Ovary (tissue), 10 donors: ENCODE measurements at regions of chr7 and their contacts with region 1.

Region 1: DNA sequence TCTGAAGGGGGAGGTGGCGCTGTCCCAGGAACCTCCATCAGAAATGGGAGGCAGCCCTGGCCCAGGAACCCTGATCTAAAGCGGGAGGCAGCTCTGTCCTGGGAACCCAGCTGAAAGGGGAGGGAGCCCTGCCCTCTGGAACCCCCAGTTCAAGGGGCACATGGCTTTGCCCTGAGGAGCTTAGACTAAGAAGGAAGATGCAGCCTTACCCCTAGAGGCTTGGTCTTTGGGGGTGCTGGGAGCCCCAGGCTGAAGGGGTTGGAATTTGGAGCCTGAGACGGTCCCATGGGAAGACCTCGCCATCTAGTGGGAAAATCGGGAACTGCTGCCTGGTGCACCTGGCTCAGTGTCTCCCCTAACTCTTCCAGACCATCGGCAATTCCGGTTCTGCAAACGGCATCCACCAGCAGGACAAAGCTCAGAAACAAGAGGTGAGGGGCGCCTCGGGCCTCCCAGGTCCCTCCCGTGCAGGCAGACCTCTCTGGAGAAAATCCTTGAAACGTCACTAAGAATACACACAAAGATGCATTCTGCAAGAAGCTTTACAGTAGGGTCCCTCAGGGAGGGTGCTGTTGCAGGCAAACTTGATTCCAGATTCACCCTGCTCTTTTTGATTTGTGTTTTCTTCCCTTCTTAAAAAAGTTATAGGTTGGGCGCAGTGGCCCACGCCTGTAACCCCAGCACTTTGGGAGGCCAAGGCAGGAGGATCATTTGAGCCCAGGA is 52.4 kb upstream of the GTF2IRD1 start:
- DNase-seq: peak; percentile 65 to 84 (median 83)
- H3K4me3 ChIP-seq: no peak overlapping the region
- H3K27ac ChIP-seq: no peak overlapping the region
- H3K4me1 ChIP-seq: no peaks in the 10 kb centered on the region
- H3K27me3 ChIP-seq: no peaks in the 10 kb centered on the region
- CTCF ChIP-seq: peak; percentile 86 to 93 (median 93)
- EP300 ChIP-seq: no peak
- POLR2A ChIP-seq: no peak

Region 2: DNA sequence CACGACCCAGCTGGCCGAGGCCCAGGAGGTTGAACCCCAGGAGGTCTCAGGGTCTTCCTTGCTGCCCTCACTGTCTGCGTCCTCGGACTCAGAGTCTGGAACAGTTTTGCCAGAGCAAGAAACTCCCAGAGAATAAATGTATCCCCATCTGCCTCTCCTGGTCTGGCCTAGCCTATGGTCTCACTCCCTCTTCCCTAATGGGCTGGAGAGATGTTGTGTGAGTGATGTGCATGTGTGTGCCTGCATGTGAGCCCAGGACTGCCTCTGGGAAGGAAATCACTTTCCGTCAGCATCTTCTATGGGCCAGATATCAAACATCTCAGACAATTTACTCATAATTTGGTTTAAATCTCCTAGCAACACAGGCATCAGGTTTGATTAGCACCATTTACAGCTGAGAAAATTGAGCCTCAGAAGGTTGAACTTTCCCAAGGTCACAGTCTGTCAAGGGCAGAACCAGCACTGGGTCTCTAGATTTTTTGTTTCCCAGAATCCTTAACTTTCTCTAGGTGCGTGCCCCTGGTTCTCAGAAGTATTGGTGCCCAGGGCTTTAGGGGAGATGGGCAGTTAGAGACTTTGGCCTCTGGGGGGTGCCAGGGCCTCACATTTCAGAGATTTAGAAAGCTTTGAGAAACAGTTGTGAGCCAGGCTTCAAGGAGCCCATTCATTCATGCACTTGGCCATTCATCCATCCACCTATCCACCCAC is 535.4 kb before region 1 on chr7:
- intact Hi-C with region 1: loop called in 1 of 4 experiments (anchors 10 kb)
- DNase-seq: peak in 3 of 5 donors; percentile 44 to 67 (median 49)
- H3K4me3 ChIP-seq: no peak overlapping the region
- H3K27ac ChIP-seq: no peak overlapping the region
- H3K4me1 ChIP-seq: peaks cover 1% of the 10 kb centered on the region
- H3K27me3 ChIP-seq: no peaks in the 10 kb centered on the region
- CTCF ChIP-seq: peak in 2 of 3 donors; percentile 10 to 29
- EP300 ChIP-seq: no peak
- POLR2A ChIP-seq: no peak

Region 3: DNA sequence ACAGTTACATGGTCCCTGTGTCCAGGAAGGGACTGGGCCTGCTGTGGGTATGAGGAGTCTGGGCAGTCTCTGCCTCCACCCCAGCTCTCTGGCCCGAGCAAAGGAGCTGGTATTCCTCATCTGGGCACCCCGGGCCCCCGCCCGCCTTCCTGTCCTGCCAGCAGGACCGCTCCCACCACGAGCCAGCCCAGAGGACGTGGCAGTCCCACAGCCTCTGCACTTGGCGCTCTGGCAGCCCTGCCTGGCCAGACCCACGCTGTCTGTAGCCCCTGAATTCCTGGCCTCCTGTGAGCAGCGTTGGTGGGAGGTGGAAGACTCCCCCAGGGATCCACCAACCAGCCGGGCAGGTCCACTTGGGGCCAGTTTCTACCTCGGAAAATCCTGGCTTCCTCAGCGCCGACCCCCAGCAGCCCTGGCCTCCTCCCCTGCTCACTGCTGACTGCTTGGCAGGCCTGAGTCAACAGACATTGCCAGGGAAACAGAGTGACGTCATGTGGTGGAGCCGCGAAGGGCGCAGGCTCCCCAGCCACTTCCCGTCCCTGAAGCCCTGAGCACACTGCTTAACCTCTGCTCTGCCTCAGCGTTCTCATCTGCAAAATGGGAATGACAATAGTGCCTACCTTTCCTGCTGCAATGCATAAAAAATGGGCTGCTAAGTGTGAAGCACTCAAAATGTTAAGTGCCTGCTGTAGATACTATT is 339.3 kb before region 1 on chr7:
- intact Hi-C with region 1: loop called in 3 of 4 experiments (anchors 5 to 10 kb)
- DNase-seq: peak; percentile 90 to 91 (median 91)
- H3K4me3 ChIP-seq: no peak overlapping the region
- H3K27ac ChIP-seq: peak overlapping the region; percentile 77 to 94
- H3K4me1 ChIP-seq: peaks cover 6% of the 10 kb centered on the region
- H3K27me3 ChIP-seq: no peaks in the 10 kb centered on the region
- CTCF ChIP-seq: no peak
- EP300 ChIP-seq: peak; percentile 12
- POLR2A ChIP-seq: no peak

Region 4: GRCh38 chr7:74068393-74069085 is 332.8 kb before region 1 on chr7:
- intact Hi-C with region 1: loop called in 3 of 4 experiments (anchors 5 to 10 kb)
- DNase-seq: peak in 3 of 5 donors; percentile 43 to 52 (median 44)
- H3K4me3 ChIP-seq: no peak overlapping the region
- H3K27ac ChIP-seq: no peak overlapping the region
- H3K4me1 ChIP-seq: no peaks in the 10 kb centered on the region
- H3K27me3 ChIP-seq: no peaks in the 10 kb centered on the region
- CTCF ChIP-seq: no peak
- EP300 ChIP-seq: no peak
- POLR2A ChIP-seq: no peak

Region 5: GRCh38 chr7:74206589-74207120 is 194.6 kb before region 1 on chr7:
- intact Hi-C with region 1: loop called (anchors 2 to 5 kb)
- DNase-seq: peak; percentile 78 to 93 (median 89)
- H3K4me3 ChIP-seq: no peak overlapping the region
- H3K27ac ChIP-seq: no peak overlapping the region
- H3K4me1 ChIP-seq: no peaks in the 10 kb centered on the region
- H3K27me3 ChIP-seq: no peaks in the 10 kb centered on the region
- CTCF ChIP-seq: peak; percentile 94 to 99 (median 96)
- EP300 ChIP-seq: no peak
- POLR2A ChIP-seq: no peak

Region 6: DNA sequence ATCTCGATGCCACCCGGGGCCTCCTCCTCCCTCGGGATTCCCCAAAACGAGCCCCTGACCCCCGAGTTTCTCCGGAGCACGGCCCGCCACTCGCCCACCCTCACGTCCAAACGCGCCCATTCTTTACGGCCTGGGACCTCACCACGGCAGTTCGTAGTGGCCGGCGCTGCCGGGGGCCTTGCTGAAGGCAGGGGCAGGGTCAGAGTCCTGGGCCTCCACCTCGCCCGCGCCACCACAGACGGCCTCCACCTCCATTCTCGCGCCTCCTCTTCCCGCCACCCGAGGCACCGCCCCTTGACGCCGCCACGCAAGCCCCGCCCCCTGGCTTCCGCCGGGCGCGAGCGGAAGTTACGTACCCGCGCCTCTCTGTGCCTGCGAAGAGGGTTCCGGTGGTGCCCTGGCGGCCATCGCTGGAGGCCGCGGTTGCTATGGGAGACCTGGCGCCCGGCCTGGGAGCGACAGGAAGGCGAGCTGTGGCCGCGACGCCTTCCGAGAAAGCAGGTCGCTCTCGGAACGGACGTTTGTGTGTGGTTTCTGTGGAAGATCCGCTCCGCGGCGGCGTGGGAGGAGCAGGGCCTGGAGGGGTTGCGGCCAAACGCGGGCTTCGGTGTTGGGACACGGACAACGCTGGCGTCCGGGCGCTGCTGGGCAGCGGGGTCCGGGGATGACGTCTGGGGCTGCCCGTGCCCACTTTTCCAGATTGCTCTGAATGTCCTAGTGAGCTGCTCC is 147.0 kb before region 1 on chr7 and contains the start of gene RFC2:
- intact Hi-C with region 1: loop called in 1 of 4 experiments (anchors 5 kb)
- DNase-seq: peak; percentile 94 to 99 (median 97)
- H3K4me3 ChIP-seq: peak within 1 kb of the TSS; percentile 79
- H3K27ac ChIP-seq: peak within 1 kb of the TSS; percentile 18 to 84
- H3K4me1 ChIP-seq: peaks cover 5% of the 10 kb centered on the region
- H3K27me3 ChIP-seq: no peaks in the 10 kb centered on the region
- CTCF ChIP-seq: peak; percentile 24 to 87 (median 85)
- EP300 ChIP-seq: peak; percentile 89
- POLR2A ChIP-seq: peak; percentile 92
- total RNA-seq, gene RFC2: 6.4 to 20.3 (median 14.1) TPM